AG04450 (cell line): ENCODE measurements at regions of chr11 and their contacts with region 1.

Region 1: DNA sequence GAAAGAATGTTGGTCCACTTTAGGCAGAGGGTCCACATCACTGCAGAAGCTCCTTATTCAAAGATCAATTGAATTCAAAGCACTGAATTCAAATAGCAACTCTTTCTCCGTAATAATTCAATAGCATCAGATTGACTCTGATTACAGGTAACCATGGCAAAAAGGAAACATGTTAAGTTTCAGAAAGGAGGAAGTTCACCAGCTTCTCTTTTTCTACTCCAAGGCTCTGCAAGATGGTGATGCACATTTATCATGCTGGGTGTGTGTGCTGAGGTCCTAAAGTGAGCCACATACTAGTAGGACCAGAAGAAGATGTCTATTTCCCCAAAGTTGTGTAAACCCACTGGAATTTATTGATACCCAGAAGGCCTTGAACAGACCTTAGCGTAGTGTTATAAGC is 18.0 kb upstream of the DRD2 start:
- DNase-seq: no peak
- H3K4me3 ChIP-seq: no peak overlapping the region
- H3K27ac ChIP-seq: no peak overlapping the region
- H3K27me3 ChIP-seq: no peaks in the 10 kb centered on the region
- CTCF ChIP-seq: no peak

Region 2: GRCh38 chr11:113314389-113315301 is 178.6 kb before region 1 on chr11 and contains the start of gene TTC12:
- CTCF ChIA-PET with region 1: interaction called, 10 read pairs
- POLR2A ChIA-PET with region 1: no interaction called
- DNase-seq: peak; percentile 61
- H3K4me3 ChIP-seq: peak within 1 kb of the TSS; percentile 95
- H3K27ac ChIP-seq: peak within 1 kb of the TSS; percentile 53
- H3K27me3 ChIP-seq: peaks cover 4% of the 10 kb centered on the region
- CTCF ChIP-seq: no peak
- polyA plus RNA-seq, gene TTC12: 17.6 and 19.0 TPM in 2 replicates

Region 3: DNA sequence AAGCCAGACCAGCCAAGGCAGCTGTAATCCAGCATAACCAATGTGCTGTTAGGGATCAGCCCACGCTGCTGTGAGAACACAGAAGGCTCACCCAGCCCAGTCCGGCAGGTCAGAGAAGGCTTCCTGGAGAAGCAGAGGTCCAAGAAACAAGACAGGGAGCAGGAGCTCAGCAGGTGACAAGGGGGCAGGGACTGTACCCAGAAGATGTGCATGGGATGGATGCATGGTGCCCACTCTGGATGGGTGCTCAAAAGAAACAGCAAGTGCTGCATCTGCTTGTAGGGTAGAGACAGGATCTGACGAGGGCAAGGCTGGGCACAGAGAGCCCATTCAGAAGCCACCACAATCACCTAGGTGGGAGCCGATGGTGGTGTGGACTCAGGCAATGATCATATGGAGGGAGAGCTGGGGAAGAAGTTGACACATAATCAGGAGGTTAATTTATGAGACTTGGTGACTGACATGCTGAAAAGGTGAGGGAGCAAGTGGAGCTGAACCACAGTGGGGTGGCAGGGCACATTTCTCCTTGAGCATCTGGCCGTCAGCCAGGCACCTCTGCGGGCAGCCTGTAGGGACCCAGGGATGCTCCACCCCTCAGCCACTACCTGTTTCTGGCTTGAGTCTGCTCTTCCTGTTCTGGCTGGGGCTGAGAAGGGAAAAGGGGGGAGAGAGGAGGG is 84.3 kb after region 1 on chr11:
- CTCF ChIA-PET with region 1: no interaction called
- POLR2A ChIA-PET with region 1: no interaction called
- DNase-seq: no peak
- H3K4me3 ChIP-seq: no peak overlapping the region
- H3K27ac ChIP-seq: no peak overlapping the region
- H3K27me3 ChIP-seq: no peaks in the 10 kb centered on the region
- CTCF ChIP-seq: no peak

Region 4: DNA sequence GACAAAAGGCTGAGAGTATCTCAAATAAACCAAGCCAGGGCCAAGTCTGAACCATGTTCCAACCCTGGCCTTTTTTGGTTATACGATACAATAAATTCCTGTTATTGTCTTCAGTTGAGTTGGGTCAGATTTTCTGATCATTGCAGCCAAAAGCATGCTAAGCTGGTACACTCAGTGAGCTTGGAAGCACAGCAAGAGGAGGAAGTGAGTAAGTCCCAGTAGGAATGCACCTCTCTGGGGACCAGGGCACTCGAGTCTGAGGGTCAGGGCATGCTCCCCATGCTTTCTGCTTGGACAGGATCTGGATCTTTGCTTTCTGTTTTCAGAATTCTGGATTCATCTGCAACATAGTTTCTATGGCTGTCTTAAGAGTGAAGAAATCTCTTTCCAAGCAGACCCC is 139.8 kb after region 1 on chr11:
- CTCF ChIA-PET with region 1: no interaction called
- POLR2A ChIA-PET with region 1: no interaction called
- DNase-seq: no peak
- H3K4me3 ChIP-seq: no peak overlapping the region
- H3K27ac ChIP-seq: no peak overlapping the region
- H3K27me3 ChIP-seq: no peaks in the 10 kb centered on the region
- CTCF ChIP-seq: no peak